Adrenal gland (tissue), 19 donors: ENCODE measurements at regions of chr2 and their contacts with region 1.

Region 1: DNA sequence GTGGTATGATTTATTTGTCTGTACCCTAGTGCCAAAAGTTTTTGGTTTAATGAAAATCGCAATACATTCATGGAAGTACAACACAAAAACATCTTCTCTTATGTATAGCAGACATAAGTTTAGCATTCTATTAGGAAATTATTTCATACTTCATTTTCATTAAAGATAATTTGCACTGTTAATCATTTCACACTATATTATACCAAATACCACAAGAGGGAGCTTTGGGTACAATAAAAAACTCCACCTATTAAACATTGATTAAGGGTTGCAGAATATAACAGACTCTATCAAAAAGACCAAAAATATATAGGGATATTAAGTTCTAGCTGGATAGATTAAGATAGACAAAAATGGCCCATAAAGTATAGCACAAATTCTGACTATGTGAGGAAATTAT is 79.0 kb downstream of the SLC66A3 start:
- DNase-seq: no peak
- H3K4me3 ChIP-seq: no peak overlapping the region
- H3K27ac ChIP-seq: no peak overlapping the region
- H3K4me1 ChIP-seq: peaks cover 0 to 9% of the 10 kb centered on the region in 2 donors
- H3K27me3 ChIP-seq: no peaks in the 10 kb centered on the region
- CTCF ChIP-seq: peak; percentile 36 to 72 (median 58)
- POLR2A ChIP-seq: no peak

Region 2: GRCh38 chr2:11124503-11125068 is 109.7 kb before region 1 on chr2:
- intact Hi-C with region 1: no loop called
- DNase-seq: peak; percentile 44 to 81 (median 61)
- H3K4me3 ChIP-seq: no peak overlapping the region
- H3K27ac ChIP-seq: no peak overlapping the region
- H3K4me1 ChIP-seq: peaks cover 0 to 2% of the 10 kb centered on the region in 2 donors
- H3K27me3 ChIP-seq: peaks cover 12% of the 10 kb centered on the region
- CTCF ChIP-seq: peak; percentile 54 to 87 (median 73)
- POLR2A ChIP-seq: no peak

Region 3: DNA sequence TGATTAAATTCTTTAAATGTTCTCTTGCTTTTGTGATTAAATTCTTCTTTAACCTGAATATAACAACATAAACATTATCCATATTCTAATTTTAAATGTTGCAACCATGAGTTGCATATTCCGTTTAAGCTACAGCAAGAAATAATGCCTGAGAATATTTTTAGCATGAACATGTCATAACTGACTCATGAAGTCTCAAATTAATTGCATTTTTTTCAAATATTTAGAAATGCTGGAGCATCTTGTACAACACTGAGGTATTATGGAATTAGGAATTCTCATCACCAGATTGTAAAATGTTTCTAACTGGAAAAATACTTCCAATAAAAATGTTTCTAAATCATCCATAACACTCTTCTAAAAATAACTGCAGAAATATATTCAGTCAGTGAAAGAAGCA is 95.5 kb after region 1 on chr2:
- intact Hi-C with region 1: loop called in 1 of 2 experiments (anchors 10 kb)
- DNase-seq: no peak
- H3K4me3 ChIP-seq: no peak overlapping the region
- H3K27ac ChIP-seq: peak overlapping the region in 1 of 5 donors; percentile 3
- H3K4me1 ChIP-seq: peaks cover 8 to 46% of the 10 kb centered on the region in 2 donors
- H3K27me3 ChIP-seq: no peaks in the 10 kb centered on the region
- CTCF ChIP-seq: no peak
- POLR2A ChIP-seq: no peak